Endothelial cell of umbilical vein (primary cell): ENCODE measurements at regions of chr9 and their contacts with region 1.

Region 1: DNA sequence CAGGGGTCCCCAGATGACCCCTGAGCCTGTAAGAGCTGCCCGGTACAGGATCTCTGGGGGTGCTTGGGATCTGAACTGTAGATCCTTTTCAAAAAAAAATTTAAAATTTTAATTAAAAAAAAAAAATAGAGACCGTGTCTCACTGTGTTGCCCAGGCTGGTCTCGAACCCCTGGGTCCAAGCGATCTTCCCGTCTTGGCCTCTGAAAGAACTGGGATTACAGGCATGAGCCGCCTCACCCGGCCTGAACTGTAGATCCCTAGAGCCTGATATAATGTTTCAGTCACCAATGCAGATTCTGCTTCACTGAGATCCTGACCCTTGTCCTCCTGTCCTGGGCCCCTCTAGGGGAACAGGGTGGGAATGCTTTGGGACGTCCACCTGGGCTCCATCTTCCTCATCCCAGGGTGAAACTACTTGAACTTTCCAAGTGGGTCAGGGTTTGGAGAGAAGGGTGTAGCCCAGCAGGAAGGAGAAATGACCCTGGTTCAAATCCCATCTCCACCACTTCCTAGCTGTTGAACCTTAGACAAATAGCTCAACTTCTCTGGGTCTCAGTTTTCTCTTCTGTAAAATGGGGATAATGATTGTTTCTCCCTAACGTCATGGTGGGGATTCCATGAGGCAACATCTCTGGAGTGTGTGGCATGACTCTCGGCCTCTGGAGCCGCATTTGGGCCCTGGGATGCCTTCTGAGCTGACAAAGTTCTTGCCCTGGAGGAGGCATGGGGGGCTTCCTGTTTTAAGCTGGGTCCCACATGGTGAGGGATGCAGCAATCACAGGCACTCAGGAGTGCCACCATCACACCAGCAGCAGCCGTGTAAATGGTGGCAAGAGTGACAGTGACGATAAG is 69.1 kb upstream of the IER5L start:
- DNase-seq: no peak
- H3K4me3 ChIP-seq: no peak overlapping the region
- H3K27ac ChIP-seq: peak overlapping the region; percentile 50
- H3K4me1 ChIP-seq: peaks cover 12% of the 10 kb centered on the region
- H3K27me3 ChIP-seq: peaks cover 5 to 14% of the 10 kb centered on the region in 2 experiments
- CTCF ChIP-seq: no peak
- POLR2A ChIP-seq: no peak

Region 2: DNA sequence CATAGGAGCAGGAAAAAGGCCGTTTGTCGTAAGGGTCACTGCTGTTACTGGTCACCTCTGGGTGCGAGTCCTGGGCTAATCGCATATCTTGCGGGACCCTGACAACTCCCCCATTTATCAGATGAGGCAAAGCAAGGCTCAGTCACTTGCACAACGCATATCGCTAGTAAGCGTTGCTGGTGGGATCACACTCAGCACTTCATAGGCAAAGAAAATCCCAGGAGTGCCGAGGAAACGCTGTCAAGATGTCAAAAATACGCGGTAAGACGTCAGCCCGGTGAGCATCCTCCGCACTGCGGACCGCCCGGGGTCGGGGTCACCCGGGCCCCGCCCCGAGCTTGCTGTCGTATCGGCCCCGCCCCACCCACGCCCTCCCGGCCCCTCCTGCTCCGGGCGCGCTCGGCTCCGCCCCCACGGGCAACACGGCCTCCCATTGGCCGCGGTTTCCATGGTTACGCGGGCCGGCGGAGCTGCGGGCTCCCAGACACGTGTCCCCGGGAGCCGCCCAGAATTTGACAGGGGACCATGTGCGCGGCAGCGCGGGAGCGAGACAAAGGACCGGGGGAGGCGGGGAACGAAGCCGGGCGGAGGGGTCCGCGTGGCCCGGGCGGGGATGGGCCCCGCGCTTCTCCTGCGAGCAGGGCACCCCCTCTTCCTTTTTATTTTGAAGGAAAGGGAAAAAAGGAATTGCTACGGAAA is 11.1 kb after region 1 on chr9:
- CTCF ChIA-PET with region 1: interaction called, 4 read pairs
- POLR2A ChIA-PET with region 1: no interaction called
- dilution Hi-C with region 1: no loop called
- intact Hi-C with region 1: loop called (anchors 1 kb)
- DNase-seq: peak; percentile 75
- H3K4me3 ChIP-seq: peak overlapping the region in 1 of 3 experiments; percentile 11
- H3K27ac ChIP-seq: no peak overlapping the region
- H3K4me1 ChIP-seq: peaks cover 9% of the 10 kb centered on the region
- H3K27me3 ChIP-seq: peaks cover 6 to 8% of the 10 kb centered on the region in 2 experiments
- CTCF ChIP-seq: no peak
- POLR2A ChIP-seq: no peak